ENCODE measurements at regions of chr22 and their contacts with region 1.

Region 1: DNA sequence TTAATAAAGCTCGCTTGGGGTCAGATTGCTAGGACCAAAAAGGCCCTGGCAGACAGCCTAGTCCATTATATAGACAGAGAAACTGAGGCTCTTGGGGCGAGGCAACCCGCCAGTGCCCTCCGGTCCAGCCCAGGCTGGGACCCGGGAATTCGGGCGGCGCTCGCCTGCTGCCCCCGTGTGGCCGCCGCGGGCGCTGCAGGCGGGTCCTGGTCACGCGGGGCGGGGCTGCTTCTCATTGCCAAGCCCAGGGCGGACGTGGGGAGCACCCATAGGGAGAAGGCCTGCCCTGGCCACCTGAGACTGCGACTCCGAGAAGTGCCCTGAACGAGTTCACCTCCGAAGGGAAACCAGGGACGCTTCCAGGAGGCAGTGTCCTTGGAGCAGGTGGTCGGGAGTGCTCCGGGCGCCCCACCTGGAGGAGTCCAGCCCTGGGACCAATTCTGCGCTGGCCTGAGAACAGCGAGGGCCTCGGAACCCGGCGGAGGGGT is 36.0 kb upstream of the CSNK1E start:
- DNase-seq: peak; percentile 94
- H3K4me3 ChIP-seq: no peak overlapping the region
- H3K27ac ChIP-seq: peak overlapping the region in 1 of 8 donors; percentile 13
- H3K4me1 ChIP-seq: peaks cover 0 to 15% (median 8%) of the 10 kb centered on the region in 6 donors
- H3K27me3 ChIP-seq: no peaks in the 10 kb centered on the region
- CTCF ChIP-seq: peak; percentile 93 to 100 (median 98)
- POLR2A ChIP-seq: no peak

Region 2: GRCh38 chr22:38114484-38115398 is 238.4 kb before region 1 on chr22:
- intact Hi-C with region 1: loop called (anchors 5 kb)
- DNase-seq: peak; percentile 95
- H3K4me3 ChIP-seq: no peak overlapping the region
- H3K27ac ChIP-seq: no peak overlapping the region
- H3K4me1 ChIP-seq: peaks cover 0 to 9% (median 7%) of the 10 kb centered on the region in 6 donors
- H3K27me3 ChIP-seq: no peaks in the 10 kb centered on the region
- CTCF ChIP-seq: peak; percentile 77 to 99 (median 95)
- POLR2A ChIP-seq: no peak

Region 3: DNA sequence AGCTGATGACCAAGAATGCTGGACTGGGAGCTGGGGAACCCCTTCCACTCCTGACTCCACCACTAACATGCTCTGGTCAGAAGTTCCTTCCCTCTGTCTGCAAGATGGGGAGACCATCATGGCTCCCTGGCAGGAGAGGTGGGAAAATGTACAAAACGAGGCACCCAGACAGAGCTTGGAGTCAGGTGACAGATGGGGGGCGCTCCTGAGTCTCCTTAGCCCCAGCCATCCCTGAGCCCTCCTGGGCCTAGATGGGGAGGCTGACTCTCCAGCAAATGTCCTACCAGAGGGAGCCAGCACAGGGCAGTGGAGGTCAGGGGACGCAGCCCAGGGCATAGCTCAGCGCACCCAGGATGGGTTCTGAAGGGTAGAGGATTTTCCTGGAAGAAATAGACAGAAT is 81.8 kb after region 1 on chr22:
- intact Hi-C with region 1: no loop called
- DNase-seq: no peak
- H3K4me3 ChIP-seq: no peak overlapping the region
- H3K27ac ChIP-seq: no peak overlapping the region
- H3K4me1 ChIP-seq: no peaks in the 10 kb centered on the region
- H3K27me3 ChIP-seq: peaks cover 0 to 16% (median 0%) of the 10 kb centered on the region in 7 donors
- CTCF ChIP-seq: no peak
- POLR2A ChIP-seq: no peak